ENCODE measurements at regions of chr3 and their contacts with region 1.

Region 1: DNA sequence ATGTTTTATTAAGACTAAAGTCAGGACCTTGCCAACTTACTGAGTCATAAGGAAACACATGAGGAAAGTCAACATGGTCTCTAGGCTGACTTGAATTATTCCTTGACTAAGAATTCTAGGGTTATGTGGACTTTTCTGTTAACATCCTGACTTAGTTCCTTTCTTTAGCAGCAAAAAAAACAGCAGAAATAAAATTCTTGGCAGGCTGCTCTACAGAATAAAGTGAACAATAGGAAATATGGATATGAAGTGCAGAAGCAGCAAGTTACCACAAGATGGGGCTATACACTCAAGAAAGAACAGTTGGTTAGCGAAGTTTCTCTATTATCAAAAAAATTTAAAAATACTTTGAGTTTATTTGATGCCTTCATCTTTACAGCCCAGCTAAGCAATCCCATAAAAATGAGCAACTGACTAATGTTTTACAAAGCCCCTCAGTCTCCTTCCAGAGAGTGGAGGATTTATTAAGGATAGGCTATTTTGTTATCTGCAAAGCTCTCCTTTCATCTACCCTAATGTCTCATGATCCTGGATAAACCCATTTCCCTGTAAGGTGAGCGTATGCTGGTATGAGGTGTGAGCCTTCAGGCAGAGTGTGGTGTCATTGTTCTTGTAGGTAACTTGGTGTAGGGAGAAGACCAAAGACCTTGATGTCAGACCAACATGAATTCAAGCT is 23.1 kb upstream of the MCCC1 start:
- DNase-seq: peak; percentile 61
- CTCF ChIP-seq: peak; percentile 77

Region 2: DNA sequence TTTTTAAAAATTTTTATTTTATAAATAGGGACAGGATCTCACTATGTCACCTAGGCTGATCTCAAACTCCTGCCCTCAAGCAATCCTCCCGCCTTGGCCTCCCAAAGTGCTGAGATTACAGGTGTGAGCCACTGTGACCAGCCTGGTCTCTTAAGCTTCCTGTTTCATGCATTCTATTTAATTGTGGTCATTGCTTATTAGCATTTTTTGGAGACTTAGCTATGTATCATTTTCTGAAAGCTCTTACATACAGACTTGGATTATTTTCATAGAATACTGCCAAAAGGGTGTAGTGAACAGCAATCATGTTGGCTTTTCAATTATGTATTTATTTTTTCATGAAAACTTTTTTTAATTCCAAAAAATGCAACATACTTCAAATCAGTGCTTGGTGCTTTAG is 90.6 kb before region 1 on chr3:
- CTCF ChIA-PET with region 1: no interaction called
- POLR2A ChIA-PET with region 1: no interaction called
- DNase-seq: no peak
- CTCF ChIP-seq: no peak

Region 3: GRCh38 chr3:183099026-183099837 is 23.2 kb before region 1 on chr3 and contains the start of gene MCCC1:
- CTCF ChIA-PET with region 1: interaction called, 13 read pairs
- POLR2A ChIA-PET with region 1: no interaction called
- DNase-seq: peak; percentile 98
- CTCF ChIP-seq: no peak

Region 4: GRCh38 chr3:183142199-183142598 is 19.8 kb after region 1 on chr3:
- CTCF ChIA-PET with region 1: interaction called, 16 read pairs
- POLR2A ChIA-PET with region 1: no interaction called
- DNase-seq: no peak
- CTCF ChIP-seq: no peak

Region 5: GRCh38 chr3:183178629-183179549 is 56.5 kb after region 1 on chr3:
- CTCF ChIA-PET with region 1: interaction called, 18 read pairs
- POLR2A ChIA-PET with region 1: no interaction called
- DNase-seq: peak; percentile 69
- CTCF ChIP-seq: peak; percentile 54

Region 6: GRCh38 chr3:183188895-183189462 is 66.6 kb after region 1 on chr3:
- CTCF ChIA-PET with region 1: interaction called, 36 read pairs
- POLR2A ChIA-PET with region 1: no interaction called
- DNase-seq: peak; percentile 60
- CTCF ChIP-seq: peak; percentile 45

Measured in GM10248 (cell line).